Colonic mucosa (tissue), 4 donors: ENCODE measurements at regions of chr15 and their contacts with region 1.

Region 1: DNA sequence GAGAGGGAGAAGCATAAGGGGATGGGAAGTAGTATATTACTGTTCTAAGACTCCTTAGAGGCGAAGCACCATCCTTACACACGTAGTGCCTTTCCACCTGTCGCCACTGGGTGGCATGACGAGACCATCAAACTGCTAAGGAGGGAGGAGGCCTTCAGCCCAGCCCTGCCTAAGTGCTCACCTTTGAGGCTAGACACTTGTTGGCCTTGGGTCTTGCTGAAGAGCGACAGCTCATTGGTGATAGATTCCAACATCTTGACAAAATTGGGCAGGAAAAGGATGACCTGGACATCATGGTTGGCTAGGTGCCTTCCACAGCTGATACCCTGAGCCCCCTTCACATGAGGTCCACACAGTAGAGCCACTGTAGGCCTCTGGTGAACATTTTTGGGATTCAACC is 19.6 kb downstream of the CLK3 start:
- DNase-seq: peak; percentile 74
- H3K4me3 ChIP-seq: no peak overlapping the region
- H3K27ac ChIP-seq: no peak overlapping the region
- H3K4me1 ChIP-seq: no peaks in the 10 kb centered on the region
- H3K27me3 ChIP-seq: no peaks in the 10 kb centered on the region
- CTCF ChIP-seq: peak; percentile 88

Region 2: DNA sequence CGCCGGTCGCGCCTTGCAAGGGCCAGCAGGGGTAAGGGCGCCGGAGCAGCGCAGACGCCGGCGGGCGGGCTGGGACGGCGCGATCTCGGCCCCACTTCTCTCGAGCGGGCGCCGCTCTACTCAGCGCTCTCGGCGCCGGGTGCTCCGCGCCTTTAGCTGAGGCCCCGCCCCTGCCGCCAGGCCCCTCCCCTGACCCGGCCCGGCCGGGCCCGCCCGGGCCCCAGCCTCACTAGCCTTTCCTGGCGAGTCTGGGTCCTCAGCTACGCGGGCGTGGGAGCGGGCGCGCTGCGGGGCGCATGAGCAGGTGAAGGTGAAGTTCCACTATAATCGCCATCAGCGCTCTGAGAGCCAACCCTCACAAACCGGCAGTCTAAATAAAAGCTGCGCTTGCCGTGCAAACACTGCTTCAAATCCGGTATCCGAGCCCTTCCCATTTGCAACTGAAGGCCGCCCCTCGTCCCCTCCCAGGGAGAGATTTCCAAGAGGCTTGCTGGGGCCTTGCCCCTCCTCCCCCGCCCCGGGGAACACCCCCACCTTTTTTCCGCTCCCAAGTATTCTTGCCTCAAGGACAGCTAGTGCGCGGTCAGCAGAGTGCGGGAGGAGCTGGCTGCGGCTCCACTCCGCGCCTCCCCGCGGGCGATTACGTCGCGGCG is 321.5 kb after region 1 on chr15 and contains the start of gene RPP25:
- intact Hi-C with region 1: loop called (anchors 10 kb)
- DNase-seq: peak; percentile 89
- H3K4me3 ChIP-seq: peak within 1 kb of the TSS; percentile 69
- H3K27ac ChIP-seq: peak within 1 kb of the TSS; percentile 92
- H3K4me1 ChIP-seq: peaks cover 18% of the 10 kb centered on the region
- H3K27me3 ChIP-seq: peaks cover 5% of the 10 kb centered on the region
- CTCF ChIP-seq: no peak
- total RNA-seq, gene RPP25: 7.8 to 25.5 TPM